AG04450 (cell line): ENCODE measurements at regions of chr12 and their contacts with region 1.

Region 1: GRCh38 chr12:109818905-109819500 is 14.2 kb downstream of the TRPV4 start:
- DNase-seq: no peak
- H3K4me3 ChIP-seq: no peak overlapping the region
- H3K27ac ChIP-seq: no peak overlapping the region
- H3K27me3 ChIP-seq: peaks cover 3% of the 10 kb centered on the region
- CTCF ChIP-seq: no peak

Region 2: DNA sequence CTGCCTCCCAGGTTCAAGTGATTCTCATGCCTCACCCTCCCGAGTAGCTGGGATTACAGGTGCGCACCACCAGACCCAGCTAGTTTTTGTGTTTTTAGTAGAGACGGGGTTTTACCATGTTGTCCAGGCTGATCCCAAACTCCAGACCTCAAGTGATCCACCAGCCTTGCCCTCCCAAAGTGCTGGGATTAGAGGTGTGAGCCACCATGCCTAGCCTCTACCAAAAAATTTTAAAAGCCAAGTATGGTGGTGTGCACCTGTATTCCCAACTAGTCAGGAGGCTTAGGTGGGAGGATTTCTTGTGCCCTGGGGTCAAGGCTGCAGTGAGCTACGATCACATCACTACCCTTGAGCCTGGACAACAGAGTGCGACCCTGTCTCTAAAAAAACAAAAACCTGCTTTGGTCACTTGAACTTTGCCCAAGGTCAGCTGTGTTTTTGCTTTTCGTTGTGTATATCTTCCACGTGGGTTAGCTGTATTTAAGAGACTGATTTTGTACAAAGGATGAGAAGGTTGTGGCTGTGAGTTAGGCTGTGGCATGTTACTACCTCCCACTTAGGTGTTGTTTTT is 216.6 kb after region 1 on chr12:
- CTCF ChIA-PET with region 1: interaction called, 12 read pairs
- POLR2A ChIA-PET with region 1: no interaction called
- DNase-seq: no peak
- H3K4me3 ChIP-seq: no peak overlapping the region
- H3K27ac ChIP-seq: no peak overlapping the region
- H3K27me3 ChIP-seq: no peaks in the 10 kb centered on the region
- CTCF ChIP-seq: no peak